ENCODE measurements at regions of chr9 and their contacts with region 1.

Region 1: GRCh38 chr9:91978739-91979414 is 28.8 kb upstream of the ROR2 start:
- DNase-seq: peak; percentile 36 to 50
- H3K4me3 ChIP-seq: no peak overlapping the region
- H3K27ac ChIP-seq: no peak overlapping the region
- H3K4me1 ChIP-seq: no peaks in the 10 kb centered on the region
- H3K27me3 ChIP-seq: no peaks in the 10 kb centered on the region
- CTCF ChIP-seq: peak in 5 of 7 experiments; percentile 25 to 63 (median 55)
- EP300 ChIP-seq: no peak
- POLR2A ChIP-seq: no peak

Region 2: DNA sequence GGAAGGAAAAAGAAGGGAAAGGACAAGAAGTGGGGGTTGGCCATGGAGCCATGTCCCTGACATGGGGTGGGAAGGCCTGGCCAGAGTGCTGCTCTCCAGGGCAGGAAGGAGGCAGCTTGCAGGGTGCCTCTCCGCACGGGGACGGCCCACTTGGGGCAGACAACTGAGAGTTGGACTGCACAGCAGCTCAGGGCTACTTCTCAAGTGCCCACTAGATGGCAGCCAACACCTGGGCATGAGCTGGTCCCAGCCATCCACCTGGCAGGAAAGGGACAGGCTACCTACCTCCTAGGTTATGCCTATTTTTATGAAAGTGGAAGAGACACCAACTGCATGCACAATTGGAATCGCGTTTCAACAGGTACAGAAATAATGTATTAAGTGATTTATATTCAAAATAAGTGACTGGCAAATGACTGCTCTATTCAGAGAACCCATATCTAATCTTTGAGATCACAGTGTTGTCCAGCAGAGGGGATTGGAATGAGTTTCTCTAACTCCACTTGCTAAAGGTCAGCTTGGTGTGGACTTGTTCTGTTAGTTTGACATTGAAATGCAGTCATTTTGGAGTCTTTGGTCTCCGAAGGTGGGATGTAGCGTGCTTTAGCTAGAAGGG is 1063.9 kb before region 1 on chr9:
- intact Hi-C with region 1: loop called (anchors 10 kb)
- DNase-seq: peak; percentile 81 to 93
- H3K4me3 ChIP-seq: no peak overlapping the region
- H3K27ac ChIP-seq: no peak overlapping the region
- H3K4me1 ChIP-seq: peaks cover 0 to 6% (median 2%) of the 10 kb centered on the region in 4 donors
- H3K27me3 ChIP-seq: peaks cover 0 to 15% (median 0%) of the 10 kb centered on the region in 3 donors
- CTCF ChIP-seq: peak in 6 of 7 experiments; percentile 17 to 97 (median 88)
- EP300 ChIP-seq: no peak
- POLR2A ChIP-seq: no peak

Measured in stomach (tissue), 19 donors.